Endothelial cell of umbilical vein (primary cell): ENCODE measurements at regions of chr7 and their contacts with region 1.

Region 1: GRCh38 chr7:107150375-107151073 is 18.3 kb upstream of the HBP1 start:
- DNase-seq: peak; percentile 89
- H3K4me3 ChIP-seq: no peak overlapping the region
- H3K27ac ChIP-seq: peak overlapping the region; percentile 20
- H3K4me1 ChIP-seq: peaks cover 13% of the 10 kb centered on the region
- H3K27me3 ChIP-seq: no peaks in the 10 kb centered on the region
- CTCF ChIP-seq: peak; percentile 28 to 35
- POLR2A ChIP-seq: no peak

Region 2: GRCh38 chr7:106793015-106793975 is 357.2 kb before region 1 on chr7:
- CTCF ChIA-PET with region 1: interaction called, 40 read pairs
- POLR2A ChIA-PET with region 1: no interaction called
- dilution Hi-C with region 1: no loop called
- intact Hi-C with region 1: loop called (anchors 1 kb)
- DNase-seq: no peak
- H3K4me3 ChIP-seq: no peak overlapping the region
- H3K27ac ChIP-seq: no peak overlapping the region
- H3K4me1 ChIP-seq: no peaks in the 10 kb centered on the region
- H3K27me3 ChIP-seq: no peaks in the 10 kb centered on the region
- CTCF ChIP-seq: peak; percentile 24 to 36
- POLR2A ChIP-seq: no peak

Region 3: GRCh38 chr7:107078517-107078966 is 72.0 kb before region 1 on chr7:
- CTCF ChIA-PET with region 1: interaction called, 12 read pairs
- POLR2A ChIA-PET with region 1: no interaction called
- dilution Hi-C with region 1: no loop called
- intact Hi-C with region 1: loop called (anchors 1 kb)
- DNase-seq: peak; percentile 95
- H3K4me3 ChIP-seq: peak overlapping the region in 1 of 3 experiments; percentile 40
- H3K27ac ChIP-seq: peak overlapping the region; percentile 95
- H3K4me1 ChIP-seq: peaks cover 51% of the 10 kb centered on the region
- H3K27me3 ChIP-seq: no peaks in the 10 kb centered on the region
- CTCF ChIP-seq: no peak
- POLR2A ChIP-seq: peak; percentile 39

Region 4: DNA sequence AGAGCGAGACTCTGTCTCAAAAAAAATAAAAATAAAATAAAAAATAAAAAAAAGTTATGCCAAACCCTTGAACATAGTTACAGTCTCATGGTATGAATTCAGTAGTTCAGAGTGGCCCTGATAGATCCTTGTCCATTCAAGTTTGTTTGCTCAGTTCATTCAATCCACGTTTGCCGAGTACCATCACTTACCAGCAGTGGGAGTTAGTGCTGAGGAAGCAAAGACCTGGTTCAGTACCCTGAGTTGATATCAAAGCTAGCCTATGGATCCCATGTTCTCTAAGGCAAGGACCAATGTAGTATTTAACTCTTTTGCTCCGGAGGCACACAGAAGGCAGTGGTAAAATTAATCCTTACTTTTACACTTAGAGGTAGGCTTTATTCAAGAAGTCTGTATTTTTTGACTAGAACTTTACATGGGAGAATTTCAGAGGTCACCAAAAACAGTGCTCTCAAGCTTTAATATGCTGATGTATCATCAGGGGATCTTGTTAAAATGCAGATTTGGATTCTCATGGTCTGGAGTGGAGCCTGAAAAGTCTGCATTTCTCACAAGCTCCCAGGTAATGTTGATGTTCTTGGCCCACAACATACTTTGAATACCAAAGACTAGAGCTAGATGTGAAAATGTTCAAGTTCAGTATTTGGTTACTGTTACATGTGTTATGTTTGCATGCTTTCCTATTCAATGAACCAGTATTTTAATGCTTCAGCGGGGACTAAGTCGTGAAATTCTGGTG is 19.9 kb before region 1 on chr7:
- CTCF ChIA-PET with region 1: interaction called, 13 read pairs
- POLR2A ChIA-PET with region 1: no interaction called
- dilution Hi-C with region 1: no loop called
- intact Hi-C with region 1: no loop called
- DNase-seq: no peak
- H3K4me3 ChIP-seq: no peak overlapping the region
- H3K27ac ChIP-seq: no peak overlapping the region
- H3K4me1 ChIP-seq: no peaks in the 10 kb centered on the region
- H3K27me3 ChIP-seq: no peaks in the 10 kb centered on the region
- CTCF ChIP-seq: peak in 1 of 2 donors; percentile 10
- POLR2A ChIP-seq: no peak

Region 5: DNA sequence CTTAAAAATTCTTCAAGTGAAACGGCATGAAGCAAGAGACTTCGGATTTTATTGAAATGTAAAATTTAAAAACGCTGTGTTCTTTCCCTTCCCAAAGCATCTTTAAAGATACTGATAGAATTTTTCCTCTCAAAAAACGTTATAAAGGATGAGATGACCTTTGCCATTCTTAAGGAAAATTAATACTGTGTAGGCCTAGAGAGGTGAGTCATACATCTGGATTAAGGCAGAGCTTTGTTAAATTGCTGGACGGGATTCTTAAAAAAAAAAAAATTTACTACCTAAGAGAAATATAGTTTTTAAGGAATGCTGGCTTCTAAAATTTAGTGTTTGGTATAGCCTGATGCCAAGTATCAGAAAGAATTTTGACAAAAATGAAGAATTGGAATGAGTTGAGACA is 11.9 kb after region 1 on chr7:
- CTCF ChIA-PET with region 1: interaction called, 21 read pairs
- POLR2A ChIA-PET with region 1: no interaction called
- dilution Hi-C with region 1: no loop called
- intact Hi-C with region 1: no loop called
- DNase-seq: no peak
- H3K4me3 ChIP-seq: no peak overlapping the region
- H3K27ac ChIP-seq: no peak overlapping the region
- H3K4me1 ChIP-seq: peaks cover 39% of the 10 kb centered on the region
- H3K27me3 ChIP-seq: no peaks in the 10 kb centered on the region
- CTCF ChIP-seq: no peak
- POLR2A ChIP-seq: no peak

Region 6: DNA sequence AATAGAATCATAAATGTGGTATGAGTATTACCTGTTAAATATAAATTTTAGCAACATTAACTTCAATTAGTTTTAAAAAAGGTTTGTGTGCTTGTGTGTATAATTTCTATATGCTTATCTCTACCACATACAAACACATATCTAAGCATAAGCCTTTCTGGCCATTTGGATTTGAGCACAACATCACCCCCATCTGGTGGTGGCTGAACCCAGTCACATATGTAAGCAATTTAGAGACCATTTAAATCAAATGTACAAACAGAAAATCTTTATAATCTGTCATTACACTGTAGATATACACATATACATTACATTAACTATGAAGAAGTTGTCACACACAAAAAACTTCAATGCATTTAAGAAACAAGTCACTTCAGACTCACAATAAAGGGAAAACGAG is 351.1 kb after region 1 on chr7:
- CTCF ChIA-PET with region 1: interaction called, 3 read pairs
- POLR2A ChIA-PET with region 1: no interaction called
- dilution Hi-C with region 1: no loop called
- intact Hi-C with region 1: loop called (anchors 2 kb)
- DNase-seq: peak; percentile 64
- H3K4me3 ChIP-seq: no peak overlapping the region
- H3K27ac ChIP-seq: no peak overlapping the region
- H3K4me1 ChIP-seq: peaks cover 2% of the 10 kb centered on the region
- H3K27me3 ChIP-seq: no peaks in the 10 kb centered on the region
- CTCF ChIP-seq: peak; percentile 36
- POLR2A ChIP-seq: no peak